Mammary epithelial cell (primary cell): ENCODE measurements at regions of chr14 and their contacts with region 1.

Region 1: GRCh38 chr14:34113005-34113511 is 162.2 kb upstream of the EGLN3 start:
- DNase-seq: peak; percentile 72
- H3K4me3 ChIP-seq: no peak overlapping the region
- H3K27ac ChIP-seq: peak overlapping the region; percentile 20
- H3K4me1 ChIP-seq: peaks cover 24% of the 10 kb centered on the region
- H3K27me3 ChIP-seq: no peaks in the 10 kb centered on the region
- CTCF ChIP-seq: no peak

Region 2: GRCh38 chr14:34093883-34094282 is 19.2 kb before region 1 on chr14:
- CTCF ChIA-PET with region 1: no interaction called
- dilution Hi-C with region 1: no loop called
- in situ Hi-C with region 1: no loop called
- intact Hi-C with region 1: no loop called
- DNase-seq: no peak
- H3K4me3 ChIP-seq: no peak overlapping the region
- H3K27ac ChIP-seq: no peak overlapping the region
- H3K4me1 ChIP-seq: peaks cover 13% of the 10 kb centered on the region
- H3K27me3 ChIP-seq: no peaks in the 10 kb centered on the region
- CTCF ChIP-seq: no peak

Region 3: DNA sequence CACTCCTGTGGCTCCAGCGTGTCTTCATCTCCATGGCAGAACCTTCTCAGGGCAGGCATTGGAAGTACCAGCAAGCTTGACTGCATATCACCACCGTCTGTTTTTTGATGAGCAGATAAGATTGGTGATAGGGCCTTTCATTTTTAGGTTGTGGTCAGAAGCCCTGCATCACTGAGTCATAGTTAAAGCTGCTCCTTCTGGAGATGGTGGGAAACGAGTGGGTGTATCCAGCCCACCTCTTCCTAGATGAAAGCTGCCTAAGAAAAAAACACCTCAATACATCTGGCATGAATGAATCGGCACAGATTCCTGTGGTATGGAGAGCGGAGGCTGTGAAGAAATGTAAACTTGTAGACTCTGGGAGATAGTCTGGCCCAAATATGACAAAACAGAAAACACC is 86.5 kb after region 1 on chr14:
- CTCF ChIA-PET with region 1: no interaction called
- dilution Hi-C with region 1: no loop called
- in situ Hi-C with region 1: no loop called
- intact Hi-C with region 1: no loop called
- DNase-seq: peak; percentile 95
- H3K4me3 ChIP-seq: no peak overlapping the region
- H3K27ac ChIP-seq: peak overlapping the region; percentile 54
- H3K4me1 ChIP-seq: peaks cover 32% of the 10 kb centered on the region
- H3K27me3 ChIP-seq: no peaks in the 10 kb centered on the region
- CTCF ChIP-seq: no peak

Region 4: GRCh38 chr14:34220921-34221320 is 107.9 kb after region 1 on chr14:
- CTCF ChIA-PET with region 1: interaction called, 4 read pairs
- dilution Hi-C with region 1: no loop called
- in situ Hi-C with region 1: no loop called
- intact Hi-C with region 1: loop called (anchors 1 kb)
- DNase-seq: no peak
- H3K4me3 ChIP-seq: no peak overlapping the region
- H3K27ac ChIP-seq: no peak overlapping the region
- H3K4me1 ChIP-seq: peaks cover 24% of the 10 kb centered on the region
- H3K27me3 ChIP-seq: no peaks in the 10 kb centered on the region
- CTCF ChIP-seq: no peak

Region 5: GRCh38 chr14:34331728-34332623 is 218.9 kb after region 1 on chr14:
- CTCF ChIA-PET with region 1: no interaction called
- dilution Hi-C with region 1: no loop called
- in situ Hi-C with region 1: no loop called
- intact Hi-C with region 1: no loop called
- DNase-seq: peak; percentile 52
- H3K4me3 ChIP-seq: no peak overlapping the region
- H3K27ac ChIP-seq: no peak overlapping the region
- H3K4me1 ChIP-seq: peaks cover 6% of the 10 kb centered on the region
- H3K27me3 ChIP-seq: no peaks in the 10 kb centered on the region
- CTCF ChIP-seq: peak; percentile 80 to 89